ENCODE measurements at regions of chr6 and their contacts with region 1.

Region 1: GRCh38 chr6:42726485-42727086 is 4.2 kb upstream of the PRPH2 start:
- DNase-seq: peak; percentile 88
- H3K4me3 ChIP-seq: peak overlapping the region; percentile 31 to 68 (median 48)
- H3K27ac ChIP-seq: peak overlapping the region; percentile 37
- H3K4me1 ChIP-seq: peaks cover 11% of the 10 kb centered on the region
- H3K27me3 ChIP-seq: no peaks in the 10 kb centered on the region
- CTCF ChIP-seq: peak; percentile 79 to 86
- POLR2A ChIP-seq: no peak

Region 2: DNA sequence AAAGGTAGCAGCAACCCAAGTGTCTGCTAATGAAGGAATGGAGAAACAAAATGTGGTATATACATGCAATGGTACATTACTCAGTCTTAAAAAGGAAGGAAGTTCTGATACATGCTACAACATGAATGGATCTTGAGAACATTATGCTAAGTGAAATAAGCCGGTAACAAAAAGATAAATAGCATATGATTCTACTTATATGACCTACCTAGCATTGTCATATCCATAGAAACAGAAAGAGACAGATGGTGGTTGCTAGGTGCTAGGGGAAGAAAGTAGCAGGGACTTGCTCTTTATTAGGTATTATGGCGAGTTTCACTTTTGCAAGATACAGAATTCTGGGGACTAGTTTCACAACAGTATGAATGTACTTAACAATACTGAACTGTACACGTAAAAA is 116.2 kb before region 1 on chr6:
- CTCF ChIA-PET with region 1: no interaction called
- POLR2A ChIA-PET with region 1: no interaction called
- dilution Hi-C with region 1: no loop called
- intact Hi-C with region 1: no loop called
- DNase-seq: no peak
- H3K4me3 ChIP-seq: no peak overlapping the region
- H3K27ac ChIP-seq: no peak overlapping the region
- H3K4me1 ChIP-seq: no peaks in the 10 kb centered on the region
- H3K27me3 ChIP-seq: no peaks in the 10 kb centered on the region
- CTCF ChIP-seq: no peak
- POLR2A ChIP-seq: no peak

Region 3: GRCh38 chr6:42692137-42692911 is 34.3 kb before region 1 on chr6:
- CTCF ChIA-PET with region 1: interaction called, 37 read pairs
- POLR2A ChIA-PET with region 1: no interaction called
- dilution Hi-C with region 1: no loop called
- intact Hi-C with region 1: loop called (anchors 2 kb)
- DNase-seq: peak; percentile 60
- H3K4me3 ChIP-seq: no peak overlapping the region
- H3K27ac ChIP-seq: peak overlapping the region; percentile 34
- H3K4me1 ChIP-seq: peaks cover 14% of the 10 kb centered on the region
- H3K27me3 ChIP-seq: no peaks in the 10 kb centered on the region
- CTCF ChIP-seq: no peak
- POLR2A ChIP-seq: no peak

Region 4: GRCh38 chr6:42745707-42746462 is 19.3 kb after region 1 on chr6 and contains the start of gene TBCC:
- CTCF ChIA-PET with region 1: interaction called, 27 read pairs
- POLR2A ChIA-PET with region 1: interaction called, 13 read pairs
- dilution Hi-C with region 1: no loop called
- intact Hi-C with region 1: loop called (anchors 1 kb)
- DNase-seq: peak; percentile 98
- H3K4me3 ChIP-seq: peak within 1 kb of the TSS; percentile 84 to 92 (median 90)
- H3K27ac ChIP-seq: peak within 1 kb of the TSS; percentile 72
- H3K4me1 ChIP-seq: peaks cover 25% of the 10 kb centered on the region
- H3K27me3 ChIP-seq: no peaks in the 10 kb centered on the region
- CTCF ChIP-seq: no peak
- POLR2A ChIP-seq: peak; percentile 97
- total RNA-seq, gene TBCC: 17.1 and 19.1 TPM in 2 replicates

Region 5: DNA sequence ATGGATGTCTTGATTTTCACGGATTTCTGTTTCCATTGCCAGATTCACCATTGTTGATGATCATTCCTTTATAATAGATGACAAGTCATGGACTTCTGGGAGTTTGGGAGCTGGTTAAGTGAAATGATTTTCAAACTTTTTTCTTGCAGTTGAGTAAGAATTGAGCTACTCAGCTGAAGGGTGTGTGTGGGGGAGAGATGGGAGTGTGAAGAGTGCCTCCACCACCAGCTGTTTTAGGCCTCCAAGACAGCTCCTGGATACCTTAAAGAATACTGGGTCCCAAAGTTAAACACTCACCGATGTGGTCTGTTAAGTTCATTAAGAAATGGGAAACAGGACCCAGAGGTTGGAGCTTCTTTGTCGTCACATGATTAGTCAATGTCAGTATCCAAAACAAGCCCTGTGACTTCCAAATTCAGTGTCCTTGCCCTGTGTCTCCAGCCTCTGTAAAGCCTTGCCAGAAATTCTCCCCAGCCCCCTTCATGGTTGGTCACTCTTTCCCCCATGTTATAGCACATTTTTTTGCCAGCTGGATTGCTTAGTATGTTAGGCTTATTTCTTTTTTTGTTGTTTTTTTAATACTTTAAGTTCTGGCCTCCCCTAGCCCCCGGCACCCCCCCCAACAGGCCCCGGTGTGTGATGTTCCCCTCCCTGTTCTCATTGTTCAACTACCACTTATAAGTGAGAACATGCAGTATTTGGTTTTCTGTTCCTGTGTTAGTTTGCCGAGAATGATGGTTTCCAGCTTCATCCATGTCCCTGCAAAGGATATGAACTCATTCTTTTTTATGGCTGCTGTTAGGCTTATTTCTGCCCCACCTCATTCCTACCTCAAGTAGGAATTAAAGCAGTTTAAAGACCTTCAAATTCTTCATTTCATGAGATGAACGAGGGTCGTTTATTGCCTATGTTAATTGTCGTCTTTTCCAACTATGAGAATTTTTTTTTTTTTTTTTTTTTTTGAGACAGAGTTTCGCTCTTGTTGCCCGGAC is 82.2 kb after region 1 on chr6:
- CTCF ChIA-PET with region 1: no interaction called
- POLR2A ChIA-PET with region 1: no interaction called
- dilution Hi-C with region 1: no loop called
- intact Hi-C with region 1: loop called (anchors 5 kb)
- DNase-seq: no peak
- H3K4me3 ChIP-seq: no peak overlapping the region
- H3K27ac ChIP-seq: no peak overlapping the region
- H3K4me1 ChIP-seq: no peaks in the 10 kb centered on the region
- H3K27me3 ChIP-seq: no peaks in the 10 kb centered on the region
- CTCF ChIP-seq: no peak
- POLR2A ChIP-seq: no peak